AG04450 (cell line): ENCODE measurements at regions of chr3 and their contacts with region 1.

Region 1: DNA sequence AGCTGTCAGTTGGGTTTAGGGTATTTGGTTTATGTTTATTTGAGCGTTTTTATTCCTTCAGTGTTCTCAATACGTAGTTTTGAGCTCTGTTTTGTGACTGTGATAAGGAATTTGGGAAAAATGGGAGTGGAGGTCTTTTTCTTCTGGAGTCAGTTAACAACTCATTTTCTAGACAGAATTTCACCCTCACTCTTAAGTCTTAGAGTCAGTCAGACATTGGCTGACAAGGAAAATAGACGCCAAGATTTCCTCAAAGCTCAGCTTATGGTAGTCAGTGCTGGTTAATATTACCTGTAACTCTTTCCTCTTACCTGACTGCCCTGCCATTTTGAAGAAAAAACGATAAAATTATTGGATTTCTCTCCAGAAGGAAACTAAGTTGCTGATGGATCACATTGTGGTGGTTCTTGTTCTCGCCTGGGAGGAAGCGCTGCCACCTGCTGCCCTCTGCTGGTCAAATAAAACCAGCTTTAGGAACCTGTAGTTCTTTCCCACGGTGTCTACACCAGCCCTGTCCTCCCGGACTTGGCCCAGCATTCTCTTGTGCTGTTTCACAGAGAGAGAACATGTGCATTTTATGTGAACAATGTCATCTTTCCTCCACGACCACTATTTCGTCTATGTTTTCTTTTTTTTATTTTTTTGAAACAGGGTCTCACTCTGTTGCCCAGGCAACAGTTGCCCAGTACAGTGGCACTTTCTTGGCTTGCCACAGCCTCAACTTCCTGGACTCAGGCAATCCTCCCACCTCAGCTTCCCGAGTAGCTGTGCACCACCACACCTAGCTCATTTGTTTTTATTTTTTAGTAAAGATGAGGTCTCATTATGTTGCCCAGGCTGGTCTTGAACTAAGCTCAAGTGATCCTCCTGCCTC is 41.4 kb upstream of the UMPS start:
- DNase-seq: peak; percentile 51
- H3K4me3 ChIP-seq: no peak overlapping the region
- H3K27ac ChIP-seq: no peak overlapping the region
- H3K27me3 ChIP-seq: peaks cover 7% of the 10 kb centered on the region
- CTCF ChIP-seq: peak; percentile 90

Region 2: DNA sequence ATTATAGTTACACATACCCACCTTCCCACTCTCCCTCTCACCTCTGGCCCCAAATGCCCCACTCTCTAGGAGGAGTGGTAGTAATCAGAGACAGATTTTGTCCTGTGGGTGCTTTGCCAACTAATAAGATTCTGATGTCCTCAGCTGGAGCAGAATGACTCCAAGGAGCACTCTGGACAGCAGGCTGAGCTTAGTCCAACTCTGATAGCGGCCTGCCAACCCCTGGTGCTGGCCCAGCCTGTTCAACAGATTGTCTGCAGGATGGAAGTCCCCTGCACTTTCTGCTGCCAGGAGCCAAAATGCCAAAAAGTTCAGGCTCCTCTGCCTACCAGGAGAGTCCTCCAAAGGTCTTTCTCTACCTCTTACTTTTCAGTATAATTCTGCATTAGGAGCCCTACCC is 119.1 kb before region 1 on chr3:
- CTCF ChIA-PET with region 1: interaction called, 268 read pairs
- POLR2A ChIA-PET with region 1: no interaction called
- DNase-seq: no peak
- H3K4me3 ChIP-seq: no peak overlapping the region
- H3K27ac ChIP-seq: no peak overlapping the region
- H3K27me3 ChIP-seq: peaks cover 20% of the 10 kb centered on the region
- CTCF ChIP-seq: no peak

Region 3: GRCh38 chr3:124607160-124607559 is 81.7 kb before region 1 on chr3:
- CTCF ChIA-PET with region 1: interaction called, 11 read pairs
- POLR2A ChIA-PET with region 1: no interaction called
- DNase-seq: peak; percentile 39
- H3K4me3 ChIP-seq: no peak overlapping the region
- H3K27ac ChIP-seq: no peak overlapping the region
- H3K27me3 ChIP-seq: peaks cover 7% of the 10 kb centered on the region
- CTCF ChIP-seq: no peak

Region 4: GRCh38 chr3:124671106-124671505 is 17.7 kb before region 1 on chr3:
- CTCF ChIA-PET with region 1: interaction called, 12 read pairs
- POLR2A ChIA-PET with region 1: no interaction called
- DNase-seq: no peak
- H3K4me3 ChIP-seq: no peak overlapping the region
- H3K27ac ChIP-seq: no peak overlapping the region
- H3K27me3 ChIP-seq: no peaks in the 10 kb centered on the region
- CTCF ChIP-seq: no peak

Region 5: DNA sequence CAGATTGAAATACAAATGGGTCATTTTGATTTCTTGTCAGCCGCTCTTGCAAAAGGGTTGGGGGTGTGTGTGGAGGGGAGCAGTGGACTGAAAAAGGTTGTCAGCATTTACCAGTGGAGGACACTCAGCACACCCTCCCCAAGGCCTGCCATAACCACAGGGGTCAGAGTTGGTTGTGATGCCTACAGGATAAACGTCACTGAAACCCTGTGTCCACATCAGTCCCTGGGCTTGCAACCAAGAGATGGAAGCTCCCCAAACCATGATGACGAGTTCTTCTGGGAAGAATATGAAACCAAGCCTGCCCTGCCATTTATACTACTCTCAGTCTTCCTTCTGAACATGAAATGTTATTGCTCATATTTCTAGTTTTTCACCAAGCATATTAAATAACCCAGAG is 12.6 kb before region 1 on chr3:
- CTCF ChIA-PET with region 1: interaction called, 23 read pairs
- POLR2A ChIA-PET with region 1: no interaction called
- DNase-seq: peak; percentile 21
- H3K4me3 ChIP-seq: no peak overlapping the region
- H3K27ac ChIP-seq: no peak overlapping the region
- H3K27me3 ChIP-seq: no peaks in the 10 kb centered on the region
- CTCF ChIP-seq: no peak

Region 6: GRCh38 chr3:124700880-124701684 is 12.3 kb after region 1 on chr3:
- CTCF ChIA-PET with region 1: interaction called, 22 read pairs
- POLR2A ChIA-PET with region 1: no interaction called
- DNase-seq: peak; percentile 18
- H3K4me3 ChIP-seq: no peak overlapping the region
- H3K27ac ChIP-seq: no peak overlapping the region
- H3K27me3 ChIP-seq: no peaks in the 10 kb centered on the region
- CTCF ChIP-seq: no peak